ENCODE measurements at regions of chr11 and their contacts with region 1.

Region 1: DNA sequence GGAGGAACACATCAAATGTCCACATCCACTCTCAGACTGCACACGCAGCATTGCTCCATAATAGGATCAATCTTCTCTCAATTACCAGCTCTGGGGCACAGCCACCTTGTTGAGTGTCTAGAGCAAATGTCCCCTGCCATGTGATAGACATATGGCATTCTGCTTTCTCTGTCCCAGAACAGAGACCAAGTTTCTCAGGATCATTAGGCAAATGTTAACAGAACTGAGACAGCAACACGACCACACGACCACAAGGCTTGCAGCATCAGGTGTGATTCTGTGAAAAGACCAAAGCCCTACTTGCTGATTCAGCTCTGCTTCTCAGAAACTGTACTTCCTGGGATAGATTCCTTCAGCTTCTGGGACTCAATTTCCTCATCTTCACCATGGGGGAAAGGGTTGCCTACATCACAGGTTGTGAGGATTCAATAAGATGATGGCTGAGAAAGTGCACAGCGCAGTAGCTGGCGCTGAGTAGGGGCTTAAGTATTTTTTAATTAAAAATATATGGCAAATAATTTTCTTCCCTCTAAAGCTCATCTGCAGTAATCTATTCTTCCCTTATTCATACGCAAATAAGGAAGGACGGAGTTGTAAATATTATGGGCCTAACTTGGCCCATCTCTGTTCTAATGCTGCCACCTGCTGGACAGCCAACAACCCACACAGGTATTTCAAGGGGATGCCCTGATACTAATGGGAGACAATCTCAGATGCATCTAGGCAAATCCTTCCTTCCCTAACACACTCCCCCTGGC is 54.3 kb upstream of the USP47 start:
- DNase-seq: peak; percentile 50 to 75 (median 61)
- ATAC-seq: peak; percentile 80 to 98 (median 95)
- H3K4me3 ChIP-seq: no peak overlapping the region
- H3K27ac ChIP-seq: no peak overlapping the region
- H3K4me1 ChIP-seq: no peaks in the 10 kb centered on the region
- H3K27me3 ChIP-seq: no peaks in the 10 kb centered on the region
- CTCF ChIP-seq: peak; percentile 75 to 80 (median 80)

Region 2: DNA sequence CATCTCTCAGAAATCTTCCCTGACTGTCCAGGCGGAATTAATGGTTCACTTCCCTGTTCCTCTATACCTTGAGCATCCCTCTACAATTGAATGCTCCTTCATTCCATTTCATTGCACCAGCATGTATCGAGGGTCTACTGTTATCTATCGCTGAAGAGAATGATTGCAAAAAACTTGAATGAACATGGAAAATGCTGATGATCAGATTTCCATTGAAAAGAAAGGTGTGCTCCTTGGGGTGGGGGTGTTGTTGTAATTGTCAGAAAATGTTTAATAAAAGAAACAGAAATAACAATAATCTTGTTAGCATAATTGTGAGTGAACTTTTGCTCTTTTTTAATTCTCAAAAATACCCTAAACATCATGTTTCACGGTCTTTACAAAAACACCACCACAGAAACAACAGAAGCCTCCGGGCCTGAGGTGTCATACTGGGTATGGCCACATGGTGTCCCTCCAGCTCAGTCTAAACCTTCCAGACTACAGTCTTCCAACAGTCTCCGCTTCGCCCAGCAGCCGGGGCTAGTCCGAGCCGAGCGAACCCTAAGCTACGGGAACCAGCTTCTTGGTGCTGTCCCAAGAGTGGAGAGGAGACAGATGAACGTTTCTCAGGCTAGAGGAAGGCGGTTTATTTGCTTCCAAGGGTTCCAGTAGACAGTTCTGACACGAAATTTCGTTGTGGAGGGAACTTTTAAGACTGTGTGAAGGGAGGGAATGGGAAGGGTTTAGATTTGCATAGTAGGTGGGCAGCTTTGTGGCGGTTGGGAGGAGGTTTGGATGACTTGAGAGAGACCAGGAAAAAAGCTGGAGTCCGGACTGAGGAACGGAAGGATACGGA is 853.8 kb before region 1 on chr11:
- intact Hi-C with region 1: loop called in 1 of 3 experiments (anchors 5 kb)
- DNase-seq: peak; percentile 88 to 96 (median 92)
- ATAC-seq: peak; percentile 88 to 93 (median 92)
- H3K4me3 ChIP-seq: peak overlapping the region in 2 of 4 donors; percentile 30 to 42
- H3K27ac ChIP-seq: peak overlapping the region in 2 of 4 donors; percentile 29 to 63
- H3K4me1 ChIP-seq: peaks cover 0 to 5% (median 3%) of the 10 kb centered on the region in 3 donors
- H3K27me3 ChIP-seq: no peaks in the 10 kb centered on the region
- CTCF ChIP-seq: peak; percentile 91 to 96 (median 94)

Region 3: GRCh38 chr11:11036848-11037732 is 750.4 kb before region 1 on chr11:
- intact Hi-C with region 1: loop called (anchors 5 to 10 kb)
- DNase-seq: peak in 4 of 6 donors; percentile 30 to 48 (median 36)
- ATAC-seq: peak; percentile 77 to 95 (median 92)
- H3K4me3 ChIP-seq: no peak overlapping the region
- H3K27ac ChIP-seq: no peak overlapping the region
- H3K4me1 ChIP-seq: no peaks in the 10 kb centered on the region
- H3K27me3 ChIP-seq: no peaks in the 10 kb centered on the region
- CTCF ChIP-seq: peak; percentile 47 to 79 (median 66)

Region 4: DNA sequence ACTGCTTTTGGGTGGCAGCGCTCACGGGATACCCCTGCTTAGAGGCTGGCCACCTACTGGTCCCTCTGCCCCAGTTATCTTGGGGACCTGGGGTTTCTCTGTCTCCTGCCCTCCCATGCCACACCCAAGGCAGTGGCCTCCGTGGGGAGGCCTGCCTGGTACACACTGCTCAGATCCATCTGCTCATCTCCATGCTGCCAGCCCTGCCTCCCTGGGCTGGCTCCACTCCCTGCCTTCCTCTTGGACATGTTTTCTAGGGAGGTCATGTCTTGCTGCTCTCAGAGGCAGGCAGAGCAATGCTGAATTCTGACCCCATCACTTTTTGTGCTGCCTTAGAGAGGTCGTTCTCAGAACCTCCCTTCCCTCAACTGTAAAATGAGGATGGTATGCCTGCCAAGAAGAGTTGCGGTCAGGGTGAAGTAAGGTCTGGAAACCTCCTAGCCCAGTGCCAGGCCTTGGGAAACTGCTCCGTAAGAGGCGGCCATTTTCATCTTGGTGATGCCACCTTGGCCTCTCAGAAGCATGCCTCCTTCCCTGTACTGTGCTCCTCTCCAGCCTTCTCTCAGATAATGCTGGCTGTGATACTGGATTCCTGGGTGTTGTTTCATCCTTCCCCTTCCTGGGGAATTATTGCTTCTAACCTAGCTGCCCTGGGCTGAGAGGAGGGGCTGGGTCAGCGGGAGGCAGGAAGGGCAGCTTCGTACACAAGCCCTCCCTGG is 743.2 kb before region 1 on chr11:
- intact Hi-C with region 1: loop called (anchors 5 to 10 kb)
- DNase-seq: no peak
- ATAC-seq: no peak
- H3K4me3 ChIP-seq: no peak overlapping the region
- H3K27ac ChIP-seq: no peak overlapping the region
- H3K4me1 ChIP-seq: no peaks in the 10 kb centered on the region
- H3K27me3 ChIP-seq: no peaks in the 10 kb centered on the region
- CTCF ChIP-seq: no peak